ENCODE measurements at regions of chr3 and their contacts with region 1.

Region 1: GRCh38 chr3:8501371-8502131 is at the start of gene LMCD1:
- DNase-seq: peak; percentile 86
- H3K4me3 Mint-ChIP-seq: peak within 1 kb of the TSS; percentile 75
- H3K27ac Mint-ChIP-seq: no peak within 1 kb of the TSS
- H3K4me1 Mint-ChIP-seq: peaks cover 21% of the 10 kb centered on the region
- H3K27me3 Mint-ChIP-seq: no peaks in the 10 kb centered on the region
- CTCF ChIP-seq: no peak
- total RNA-seq, gene LMCD1: 0.63 and 0.83 TPM in 2 replicates

Region 2: GRCh38 chr3:8490079-8490552 is 11.4 kb before region 1 on chr3:
- CTCF ChIA-PET with region 1: interaction called, 3 read pairs
- POLR2A ChIA-PET with region 1: no interaction called
- intact Hi-C with region 1: loop called (anchors 1 kb)
- DNase-seq: peak; percentile 61
- H3K4me3 Mint-ChIP-seq: no peak overlapping the region
- H3K27ac Mint-ChIP-seq: no peak overlapping the region
- H3K4me1 Mint-ChIP-seq: peaks cover 33% of the 10 kb centered on the region
- H3K27me3 Mint-ChIP-seq: no peaks in the 10 kb centered on the region
- CTCF ChIP-seq: no peak